ENCODE measurements at regions of chr20 and their contacts with region 1.

Region 1: DNA sequence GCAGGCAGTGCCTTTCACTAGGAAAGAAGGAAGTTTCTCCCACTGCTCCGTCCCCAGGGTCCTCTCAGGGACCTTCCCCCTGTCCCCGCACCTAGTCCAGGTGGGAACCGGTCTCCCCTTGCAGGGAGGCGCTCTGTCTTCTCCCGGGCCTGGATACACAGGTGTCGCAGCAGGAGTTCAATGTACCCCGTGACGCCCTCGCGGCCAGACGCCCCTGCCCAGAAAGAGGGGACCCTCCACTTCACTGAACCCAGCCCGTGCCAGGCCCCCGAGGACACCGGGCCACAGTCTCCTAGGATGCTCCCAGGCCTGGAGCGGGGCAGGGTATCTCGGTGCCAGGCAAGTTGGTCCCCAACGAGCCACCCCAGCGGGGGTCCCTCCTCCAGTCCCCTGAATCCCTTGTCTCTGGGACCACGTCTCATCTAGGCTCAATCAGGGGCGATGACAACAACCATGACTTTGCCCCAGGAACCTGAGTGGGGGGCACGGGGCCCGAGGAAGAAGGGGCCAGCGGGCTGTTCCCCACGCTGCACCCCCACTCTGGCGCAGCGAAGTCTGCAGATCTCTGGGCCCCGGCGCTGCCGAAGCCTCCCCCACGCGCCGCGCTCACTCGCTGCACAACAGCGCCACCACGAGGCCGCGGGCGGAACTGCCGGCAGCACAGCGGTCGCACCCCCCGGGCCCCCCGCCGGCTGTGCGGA is 103.0 kb downstream of the EDN3 start:
- DNase-seq: peak; percentile 95
- H3K4me3 ChIP-seq: peak overlapping the region; percentile 21 to 58
- H3K27ac ChIP-seq: peak overlapping the region in 1 of 2 experiments; percentile 50; a peak in 1 of 4 replicates
- H3K4me1 ChIP-seq: peaks cover 0 to 29% of the 10 kb centered on the region in 2 experiments; a peak in 2 of 4 replicates
- H3K27me3 ChIP-seq: peaks cover 8% of the 10 kb centered on the region; the same call in 1 of the 2 replicates
- CTCF ChIP-seq: peak; percentile 97
- EP300 ChIP-seq: peak in 1 of 2 experiments; percentile 26; a peak in 1 of 4 replicates
- RAD21 ChIP-seq: peak; percentile 91

Region 2: DNA sequence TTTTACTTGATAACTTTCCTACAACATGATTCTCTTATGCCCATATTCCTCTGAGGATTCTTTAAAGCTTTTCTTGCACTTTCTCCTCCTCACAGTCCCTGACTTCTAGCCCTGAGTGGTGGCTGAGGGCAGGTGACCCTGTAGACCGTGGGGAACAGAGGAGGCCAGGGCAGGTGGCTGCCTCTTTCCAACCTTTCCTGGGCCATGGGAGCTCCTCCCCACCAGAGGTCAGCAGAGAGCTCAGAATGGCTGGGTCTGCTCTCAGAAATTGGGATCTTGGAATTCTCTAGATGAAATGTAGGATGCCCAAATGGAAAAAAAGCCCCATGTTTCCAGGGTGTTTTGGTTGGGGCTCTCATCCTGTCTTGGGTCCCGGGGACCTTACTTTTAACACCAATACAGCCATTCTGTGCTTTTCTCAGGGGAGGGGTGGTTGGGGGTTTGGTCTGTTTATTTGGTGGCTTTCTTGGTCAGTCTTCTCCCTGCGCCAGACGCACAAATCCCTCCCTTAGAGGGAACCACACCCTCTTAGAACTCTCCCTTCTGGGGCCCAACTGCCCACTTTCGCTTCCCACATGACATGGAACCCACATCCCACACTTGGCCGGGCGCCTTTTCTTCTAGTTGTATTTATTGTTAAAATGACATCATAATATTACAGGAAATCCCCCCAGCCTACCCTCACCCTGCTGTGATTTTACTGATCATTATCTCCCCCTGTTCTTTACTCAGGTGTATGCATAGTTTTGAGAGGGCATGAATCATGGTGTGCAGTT is 533.0 kb before region 1 on chr20:
- CTCF ChIA-PET with region 1: interaction called, 40 read pairs
- POLR2A ChIA-PET with region 1: no interaction called
- DNase-seq: peak; percentile 80
- H3K4me3 ChIP-seq: peak overlapping the region in 1 of 2 experiments; percentile 19; a peak in 1 of 4 replicates
- H3K27ac ChIP-seq: no peak overlapping the region; a peak in 1 of 4 replicates
- H3K4me1 ChIP-seq: peaks cover 0 to 14% of the 10 kb centered on the region in 2 experiments; a peak in 1 of 4 replicates
- H3K27me3 ChIP-seq: no peaks in the 10 kb centered on the region
- CTCF ChIP-seq: peak; percentile 92
- EP300 ChIP-seq: no peak
- RAD21 ChIP-seq: peak; percentile 96

Region 3: DNA sequence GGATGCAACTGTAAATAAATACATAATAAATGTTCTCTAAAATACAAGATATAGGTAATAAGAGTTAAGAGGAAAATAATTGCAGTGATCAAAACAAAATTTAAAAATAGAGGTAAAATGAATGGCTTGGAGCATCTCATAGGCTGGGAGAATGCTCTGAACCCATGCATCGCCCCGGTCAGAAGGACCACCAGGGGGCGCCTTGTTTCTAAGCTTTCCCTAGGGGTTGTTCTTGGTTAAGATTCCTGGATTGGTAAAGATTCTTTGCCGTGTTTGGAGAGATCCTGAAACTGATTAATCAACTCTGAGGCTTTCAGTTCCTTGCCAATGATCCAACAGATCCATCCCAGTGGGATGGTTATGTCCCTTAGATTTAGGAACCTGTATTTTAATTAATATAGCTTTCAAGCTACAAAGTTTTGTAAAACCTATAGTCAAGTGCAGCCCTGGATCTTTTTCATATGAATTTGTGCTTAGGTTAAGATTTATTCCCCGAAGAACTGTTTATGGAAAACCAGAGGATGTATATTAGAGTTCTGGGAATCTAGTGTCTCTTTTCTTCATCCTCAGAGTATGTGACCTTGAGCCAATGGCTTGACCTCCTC is 315.5 kb before region 1 on chr20:
- CTCF ChIA-PET with region 1: interaction called, 17 read pairs
- POLR2A ChIA-PET with region 1: no interaction called
- DNase-seq: peak; percentile 55
- H3K4me3 ChIP-seq: peak overlapping the region in 1 of 2 experiments; percentile 39; a peak in 1 of 4 replicates
- H3K27ac ChIP-seq: no peak overlapping the region
- H3K4me1 ChIP-seq: peaks cover 0 to 3% of the 10 kb centered on the region in 2 experiments; a peak in 2 of 4 replicates
- H3K27me3 ChIP-seq: no peaks in the 10 kb centered on the region
- CTCF ChIP-seq: peak; percentile 90
- EP300 ChIP-seq: no peak
- RAD21 ChIP-seq: peak; percentile 71

Region 4: DNA sequence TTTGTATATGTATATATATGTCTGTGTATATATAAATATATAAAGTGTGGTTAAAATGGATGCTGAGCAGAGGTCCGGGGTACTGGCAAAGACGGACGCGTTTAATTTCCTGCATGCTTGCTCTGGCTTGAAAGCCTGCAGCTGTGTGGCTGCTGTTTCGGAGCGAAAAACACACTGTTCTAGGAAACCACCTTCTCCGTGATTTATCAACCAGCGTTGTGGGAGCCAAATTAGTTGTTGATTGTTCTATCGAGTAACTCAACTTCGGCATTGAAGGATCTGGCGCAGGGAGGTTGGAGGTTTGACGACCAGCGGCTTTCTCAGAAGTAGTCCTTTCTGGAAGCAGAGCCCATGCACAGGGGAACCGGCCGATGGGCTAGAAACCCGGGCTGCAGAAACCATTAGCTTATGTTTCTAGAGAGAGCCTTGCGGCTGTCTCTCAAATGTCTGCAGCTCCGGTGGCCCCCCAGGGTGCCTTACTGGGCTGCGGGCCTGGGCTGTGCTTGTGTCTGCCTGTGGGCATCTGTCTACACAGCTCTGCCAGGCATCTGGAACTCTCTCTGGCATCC is 21.2 kb before region 1 on chr20:
- CTCF ChIA-PET with region 1: interaction called, 13 read pairs
- POLR2A ChIA-PET with region 1: no interaction called
- DNase-seq: no peak
- H3K4me3 ChIP-seq: no peak overlapping the region
- H3K27ac ChIP-seq: no peak overlapping the region; a peak in 1 of 4 replicates
- H3K4me1 ChIP-seq: peaks cover 0 to 16% of the 10 kb centered on the region in 2 experiments; a peak in 1 of 4 replicates
- H3K27me3 ChIP-seq: no peaks in the 10 kb centered on the region
- CTCF ChIP-seq: no peak
- EP300 ChIP-seq: no peak
- RAD21 ChIP-seq: no peak

Region 5: DNA sequence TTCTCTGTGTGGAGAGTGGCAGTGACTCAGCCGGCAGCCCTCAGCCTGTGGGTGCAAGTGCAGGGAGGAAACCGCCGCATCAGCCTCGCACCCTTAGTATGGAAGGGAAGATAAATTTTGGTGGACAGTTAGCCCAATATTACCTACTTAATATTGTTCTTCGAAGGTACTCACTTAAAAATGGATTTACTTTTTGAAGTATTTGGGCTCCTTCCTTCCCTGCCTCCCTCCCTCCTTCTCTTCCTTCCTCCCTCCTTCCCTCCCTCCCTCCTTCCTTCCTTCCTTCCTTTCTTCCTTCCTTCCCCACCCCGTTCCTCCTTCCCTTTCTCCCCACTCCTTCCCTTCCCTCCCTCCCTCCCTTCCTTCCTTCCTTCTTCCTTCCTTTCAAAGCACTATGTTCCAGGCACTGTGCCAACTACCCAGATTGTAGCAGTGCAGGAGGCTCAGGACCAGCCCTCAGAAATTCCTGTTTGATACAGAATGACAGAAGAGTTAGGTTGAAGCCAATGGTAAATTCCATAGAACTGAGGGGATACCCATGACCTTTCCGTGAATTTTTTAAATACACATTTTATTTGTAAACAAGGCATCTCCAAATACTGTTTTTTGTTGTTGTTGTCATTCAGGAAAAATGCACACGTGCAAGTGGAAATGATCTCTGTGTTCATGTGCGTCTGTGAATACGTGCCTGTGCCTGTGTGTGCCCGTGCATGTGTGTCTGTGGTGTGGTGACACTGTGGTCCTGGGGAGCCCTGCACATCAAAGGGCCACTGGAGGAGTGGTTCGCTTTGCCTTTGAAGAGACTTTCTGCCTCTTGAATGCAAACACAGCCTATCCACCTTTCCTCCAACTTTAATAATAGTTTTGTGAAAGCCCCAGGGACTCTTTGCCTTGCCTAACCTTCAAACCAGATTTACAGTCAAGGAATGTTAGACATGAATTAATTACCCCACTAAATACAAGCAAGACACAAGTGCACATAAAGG is 38.7 kb after region 1 on chr20:
- CTCF ChIA-PET with region 1: interaction called, 29 read pairs
- POLR2A ChIA-PET with region 1: no interaction called
- DNase-seq: peak; percentile 44
- H3K4me3 ChIP-seq: no peak overlapping the region
- H3K27ac ChIP-seq: peak overlapping the region in 1 of 2 experiments; percentile 58; a peak in 1 of 4 replicates
- H3K4me1 ChIP-seq: peaks cover 9 to 50% of the 10 kb centered on the region in 2 experiments; a peak in 3 of 4 replicates
- H3K27me3 ChIP-seq: no peaks in the 10 kb centered on the region
- CTCF ChIP-seq: no peak
- EP300 ChIP-seq: no peak
- RAD21 ChIP-seq: no peak

Region 6: GRCh38 chr20:59835448-59836395 is 432.3 kb after region 1 on chr20:
- CTCF ChIA-PET with region 1: no interaction called
- POLR2A ChIA-PET with region 1: no interaction called
- DNase-seq: peak; percentile 72
- H3K4me3 ChIP-seq: peak overlapping the region; percentile 31 to 45; a peak in 3 of 4 replicates
- H3K27ac ChIP-seq: peak overlapping the region in 1 of 2 experiments; percentile 64; a peak in 1 of 4 replicates
- H3K4me1 ChIP-seq: peaks cover 0 to 17% of the 10 kb centered on the region in 2 experiments; a peak in 1 of 4 replicates
- H3K27me3 ChIP-seq: no peaks in the 10 kb centered on the region
- CTCF ChIP-seq: no peak
- EP300 ChIP-seq: no peak
- RAD21 ChIP-seq: no peak